Caco-2 (cell line): ENCODE measurements at regions of chr21 and their contacts with region 1.

Region 1: DNA sequence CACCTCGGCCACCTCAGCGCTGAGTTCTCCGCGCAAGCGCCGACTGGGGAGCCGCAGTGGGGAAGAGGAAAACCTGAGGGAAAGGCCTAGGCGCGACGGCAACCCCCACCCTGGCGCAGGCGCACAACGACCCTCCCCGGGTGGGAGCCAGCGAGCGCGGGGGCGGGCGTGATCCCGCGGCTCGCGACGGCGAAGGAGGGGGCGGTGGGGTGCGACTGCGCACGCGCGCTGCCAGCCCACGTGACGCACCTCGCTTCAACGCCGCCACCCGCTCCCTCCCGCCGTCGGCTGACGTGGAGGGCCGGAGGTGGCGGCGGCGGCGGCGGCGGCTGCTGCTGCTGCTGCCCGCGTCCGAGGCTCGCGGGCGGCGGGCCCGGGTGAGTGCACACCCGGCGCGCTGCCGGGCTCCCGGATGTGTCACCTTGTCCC is at the starts of genes PIGP and TTC3:
- DNase-seq: peak; percentile 95 to 98
- H3K4me3 ChIP-seq: peak within 1 kb of the TSS; percentile 98
- H3K4me3 Mint-ChIP-seq: peak within 1 kb of the TSS; percentile 98
- H3K27ac Mint-ChIP-seq: peak within 1 kb of the TSS; percentile 93
- H3K4me1 ChIP-seq: peaks cover 9% of the 10 kb centered on the region; the same call in 1 of the 2 replicates
- H3K4me1 Mint-ChIP-seq: peaks cover 20% of the 10 kb centered on the region
- H3K27me3 ChIP-seq: no peaks in the 10 kb centered on the region
- H3K27me3 Mint-ChIP-seq: no peaks in the 10 kb centered on the region
- CTCF ChIP-seq: no peak
- total RNA-seq, gene PIGP: 22.3 and 23.4 TPM in 2 replicates
- total RNA-seq, gene TTC3: 92.8 and 105 TPM in 2 replicates

Region 2: DNA sequence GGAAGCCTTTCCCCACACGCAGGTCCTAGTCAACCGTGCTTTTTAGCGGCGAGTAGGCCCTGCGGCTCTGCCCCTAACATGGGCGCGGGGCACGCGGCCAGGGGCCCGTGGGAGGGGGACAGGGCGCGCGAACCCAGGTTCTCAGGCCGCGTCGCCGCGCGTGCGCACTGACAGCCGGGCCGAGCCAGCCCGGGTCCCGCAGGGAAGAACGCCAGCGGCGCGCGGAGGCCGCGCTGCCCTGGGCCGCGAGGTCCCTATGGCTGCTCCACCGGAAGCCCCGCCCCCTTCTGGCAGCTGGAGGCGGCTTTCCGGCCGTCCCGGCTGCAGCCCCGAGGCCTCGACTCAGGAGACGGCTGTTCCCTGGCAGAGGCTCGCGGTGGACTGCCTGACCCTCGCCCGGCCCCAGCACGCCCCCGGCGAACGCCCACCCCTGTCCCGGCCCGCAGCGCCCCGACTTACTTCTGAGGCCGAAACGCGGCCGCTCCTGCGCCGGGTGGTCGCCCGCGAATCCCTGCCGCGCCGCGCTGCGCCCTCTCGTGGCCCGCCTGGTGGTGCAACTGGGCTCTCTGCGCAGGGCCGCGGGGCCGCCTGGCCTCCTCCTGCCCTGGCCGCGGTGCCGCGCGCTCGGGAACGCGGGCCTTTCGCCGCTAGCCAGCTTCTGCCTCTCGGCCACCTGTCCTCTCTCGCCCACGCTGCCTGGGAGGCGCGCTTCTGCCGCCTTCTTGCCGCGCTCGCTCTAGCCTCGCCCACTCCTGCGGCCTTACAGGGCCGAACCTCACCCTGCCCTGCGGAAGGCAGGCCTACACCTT is 83.1 kb before region 1 on chr21:
- CTCF ChIA-PET with region 1: no interaction called
- POLR2A ChIA-PET with region 1: interaction called, 13 read pairs
- intact Hi-C with region 1: no loop called
- DNase-seq: peak; percentile 92 to 95
- H3K4me3 ChIP-seq: peak overlapping the region; percentile 46
- H3K4me3 Mint-ChIP-seq: peak overlapping the region; percentile 96
- H3K27ac Mint-ChIP-seq: peak overlapping the region; percentile 96
- H3K4me1 ChIP-seq: peaks cover 15% of the 10 kb centered on the region
- H3K4me1 Mint-ChIP-seq: peaks cover 12% of the 10 kb centered on the region
- H3K27me3 ChIP-seq: no peaks in the 10 kb centered on the region
- H3K27me3 Mint-ChIP-seq: no peaks in the 10 kb centered on the region
- CTCF ChIP-seq: peak in 1 of 2 experiments; percentile 68

Region 3: GRCh38 chr21:37009740-37010341 is 63.2 kb before region 1 on chr21:
- CTCF ChIA-PET with region 1: no interaction called
- POLR2A ChIA-PET with region 1: interaction called, 6 read pairs
- intact Hi-C with region 1: loop called (anchors 5 kb)
- DNase-seq: peak; percentile 87 to 90
- H3K4me3 ChIP-seq: peak overlapping the region; percentile 43
- H3K4me3 Mint-ChIP-seq: peak overlapping the region; percentile 70
- H3K27ac Mint-ChIP-seq: no peak overlapping the region
- H3K4me1 ChIP-seq: no peaks in the 10 kb centered on the region
- H3K4me1 Mint-ChIP-seq: no peaks in the 10 kb centered on the region
- H3K27me3 ChIP-seq: no peaks in the 10 kb centered on the region
- H3K27me3 Mint-ChIP-seq: no peaks in the 10 kb centered on the region
- CTCF ChIP-seq: peak; percentile 85 to 87

Region 4: DNA sequence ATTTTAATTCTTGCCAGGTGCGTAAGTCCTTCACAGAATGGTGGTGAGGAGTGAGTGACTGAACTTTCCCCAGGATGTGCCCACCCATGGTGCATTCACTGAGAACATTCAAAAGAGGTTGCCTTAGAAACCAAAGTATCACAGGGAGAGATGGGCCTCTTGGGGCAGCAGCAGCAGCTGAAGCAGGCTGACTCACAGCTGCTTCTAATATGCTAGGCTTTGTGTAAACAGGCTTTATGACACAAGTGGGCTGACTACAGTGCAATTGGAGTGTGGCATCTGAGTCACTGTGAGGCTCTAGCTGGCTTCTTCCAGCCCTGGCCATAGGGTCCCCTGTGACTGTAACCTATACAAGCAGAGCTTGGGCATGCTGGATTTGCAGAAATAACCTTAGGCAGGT is 12.7 kb before region 1 on chr21:
- CTCF ChIA-PET with region 1: interaction called, 3 read pairs
- POLR2A ChIA-PET with region 1: no interaction called
- intact Hi-C with region 1: loop called (anchors 1 kb)
- DNase-seq: peak; percentile 73 to 75
- H3K4me3 ChIP-seq: no peak overlapping the region
- H3K4me3 Mint-ChIP-seq: no peak overlapping the region
- H3K27ac Mint-ChIP-seq: peak overlapping the region; percentile 70
- H3K4me1 ChIP-seq: peaks cover 13% of the 10 kb centered on the region
- H3K4me1 Mint-ChIP-seq: peaks cover 12% of the 10 kb centered on the region
- H3K27me3 ChIP-seq: no peaks in the 10 kb centered on the region
- H3K27me3 Mint-ChIP-seq: no peaks in the 10 kb centered on the region
- CTCF ChIP-seq: peak in 1 of 2 experiments; percentile 39